HCT116 (cell line): ENCODE measurements at regions of chr12 and their contacts with region 1.

Region 1: GRCh38 chr12:81039231-81039630 is 38.6 kb upstream of the ACSS3 start:
- DNase-seq: no peak
- ATAC-seq: no peak
- H3K4me3 ChIP-seq: no peak overlapping the region
- H3K27ac ChIP-seq: no peak overlapping the region
- H3K4me1 ChIP-seq: no peaks in the 10 kb centered on the region
- H3K27me3 ChIP-seq: no peaks in the 10 kb centered on the region
- CTCF ChIP-seq: no peak
- POLR2A ChIP-seq: no peak
- RAD21 ChIP-seq: no peak

Region 2: DNA sequence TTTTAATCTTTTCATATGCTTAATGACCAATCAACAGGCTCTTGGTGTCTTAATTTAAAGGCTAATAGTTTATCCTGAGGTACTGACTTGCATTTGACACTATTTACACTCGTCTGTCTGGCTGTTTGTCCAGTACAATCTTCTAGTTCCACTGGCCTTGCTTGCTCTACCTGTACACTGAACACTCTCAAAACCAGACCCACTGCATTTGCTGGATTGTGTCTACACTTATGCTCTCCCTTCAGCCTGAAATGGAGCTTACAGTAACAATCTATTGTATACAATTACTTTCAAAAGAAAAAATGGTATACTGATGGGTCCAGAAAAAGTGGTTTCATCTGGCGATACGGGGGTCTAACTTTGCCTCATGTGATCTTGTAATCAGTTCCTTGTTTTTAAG is 36.3 kb after region 1 on chr12:
- CTCF ChIA-PET with region 1: no interaction called
- POLR2A ChIA-PET with region 1: no interaction called
- RAD21 ChIA-PET with region 1: no interaction called
- intact Hi-C with region 1: loop called (anchors 2 kb)
- DNase-seq: no peak
- ATAC-seq: no peak
- H3K4me3 ChIP-seq: no peak overlapping the region
- H3K27ac ChIP-seq: no peak overlapping the region
- H3K4me1 ChIP-seq: no peaks in the 10 kb centered on the region
- H3K27me3 ChIP-seq: peaks cover 4% of the 10 kb centered on the region; the same call in 1 of the 2 replicates
- CTCF ChIP-seq: no peak
- POLR2A ChIP-seq: no peak
- RAD21 ChIP-seq: no peak